Left ventricle myocardium inferior (tissue), 1 donor: ENCODE measurements at regions of chr9 and their contacts with region 1.

Region 1: DNA sequence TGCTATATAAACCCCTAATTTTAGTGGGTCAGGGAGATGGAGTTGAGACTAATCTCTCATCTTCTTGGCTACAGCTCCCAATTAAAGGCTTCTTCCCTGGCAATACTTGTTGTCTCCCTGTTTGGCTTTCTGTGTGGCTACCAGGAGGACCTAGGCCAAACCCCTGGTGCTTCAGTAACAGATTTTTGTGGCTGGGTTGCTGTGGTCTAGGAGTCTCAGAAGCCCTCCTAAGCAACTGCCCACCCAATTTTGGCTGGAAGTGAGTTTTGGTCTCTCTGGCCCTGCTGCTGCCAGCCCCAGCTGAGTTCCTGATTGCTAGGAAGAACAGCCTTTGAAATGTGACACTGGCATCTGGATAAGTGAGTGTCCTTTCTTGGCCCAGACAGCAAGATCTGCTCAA is 9.8 kb downstream of the RIGI start:
- DNase-seq: no peak
- H3K4me3 ChIP-seq: no peak overlapping the region
- H3K27ac ChIP-seq: no peak overlapping the region
- H3K4me1 ChIP-seq: no peaks in the 10 kb centered on the region
- H3K27me3 ChIP-seq: no peaks in the 10 kb centered on the region
- CTCF ChIP-seq: no peak

Region 2: DNA sequence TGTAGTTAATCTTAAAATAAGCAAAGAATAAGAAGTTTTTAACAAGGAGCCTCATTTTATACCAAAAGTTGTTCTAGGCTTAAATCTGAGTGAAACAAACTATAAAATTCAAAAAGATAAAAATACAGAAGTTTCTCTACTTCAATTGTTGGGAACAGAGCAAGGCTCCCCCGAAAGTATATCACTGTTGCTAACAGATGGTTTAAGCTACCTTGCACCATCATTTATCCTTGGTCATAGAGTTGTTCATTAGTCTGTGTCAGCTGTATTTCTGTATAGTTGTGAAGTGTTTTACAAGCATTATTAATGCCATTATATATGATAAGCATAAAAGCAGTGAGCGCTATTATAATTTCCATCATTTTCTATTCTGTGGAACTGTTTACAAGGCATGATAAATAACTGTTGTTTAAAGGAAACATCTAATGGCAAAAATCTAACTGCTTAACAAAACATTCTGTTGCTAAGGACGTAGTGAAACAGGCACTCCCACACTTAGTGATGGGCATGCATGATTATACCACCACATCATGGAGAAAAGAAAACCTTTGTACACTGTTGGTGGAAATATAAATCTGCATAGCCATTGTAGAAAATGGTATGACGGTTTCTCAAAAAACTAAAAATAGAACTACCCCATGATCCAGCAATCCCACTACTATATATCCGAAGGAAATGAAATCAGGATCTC is 155.1 kb before region 1 on chr9:
- intact Hi-C with region 1: no loop called
- DNase-seq: no peak
- H3K4me3 ChIP-seq: no peak overlapping the region
- H3K27ac ChIP-seq: no peak overlapping the region
- H3K4me1 ChIP-seq: no peaks in the 10 kb centered on the region
- H3K27me3 ChIP-seq: peaks cover 31% of the 10 kb centered on the region
- CTCF ChIP-seq: no peak

Region 3: DNA sequence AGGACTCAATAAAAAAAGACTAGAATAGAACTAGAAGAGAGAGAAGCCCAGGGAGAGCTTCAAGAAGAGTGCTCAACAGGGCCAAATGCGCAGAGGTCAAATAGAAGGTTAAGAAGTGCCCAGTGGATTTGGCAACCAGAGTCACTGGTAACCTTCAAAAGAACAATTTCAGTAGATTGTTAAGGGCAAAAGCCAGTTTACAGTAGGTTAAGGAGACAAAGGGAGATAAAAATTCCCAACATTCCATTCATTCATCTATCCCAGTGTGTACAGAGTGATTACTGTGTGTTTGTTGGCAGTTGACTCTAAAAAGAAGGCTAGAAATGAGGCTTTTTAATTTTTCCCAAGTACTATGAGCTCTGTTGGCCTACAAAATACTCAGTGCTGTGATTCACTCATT is 59.7 kb before region 1 on chr9:
- intact Hi-C with region 1: loop called (anchors 10 kb)
- DNase-seq: no peak
- H3K4me3 ChIP-seq: no peak overlapping the region
- H3K27ac ChIP-seq: no peak overlapping the region
- H3K4me1 ChIP-seq: peaks cover 7% of the 10 kb centered on the region
- H3K27me3 ChIP-seq: no peaks in the 10 kb centered on the region
- CTCF ChIP-seq: no peak